ENCODE measurements at regions of chr17 and their contacts with region 1.

Region 1: DNA sequence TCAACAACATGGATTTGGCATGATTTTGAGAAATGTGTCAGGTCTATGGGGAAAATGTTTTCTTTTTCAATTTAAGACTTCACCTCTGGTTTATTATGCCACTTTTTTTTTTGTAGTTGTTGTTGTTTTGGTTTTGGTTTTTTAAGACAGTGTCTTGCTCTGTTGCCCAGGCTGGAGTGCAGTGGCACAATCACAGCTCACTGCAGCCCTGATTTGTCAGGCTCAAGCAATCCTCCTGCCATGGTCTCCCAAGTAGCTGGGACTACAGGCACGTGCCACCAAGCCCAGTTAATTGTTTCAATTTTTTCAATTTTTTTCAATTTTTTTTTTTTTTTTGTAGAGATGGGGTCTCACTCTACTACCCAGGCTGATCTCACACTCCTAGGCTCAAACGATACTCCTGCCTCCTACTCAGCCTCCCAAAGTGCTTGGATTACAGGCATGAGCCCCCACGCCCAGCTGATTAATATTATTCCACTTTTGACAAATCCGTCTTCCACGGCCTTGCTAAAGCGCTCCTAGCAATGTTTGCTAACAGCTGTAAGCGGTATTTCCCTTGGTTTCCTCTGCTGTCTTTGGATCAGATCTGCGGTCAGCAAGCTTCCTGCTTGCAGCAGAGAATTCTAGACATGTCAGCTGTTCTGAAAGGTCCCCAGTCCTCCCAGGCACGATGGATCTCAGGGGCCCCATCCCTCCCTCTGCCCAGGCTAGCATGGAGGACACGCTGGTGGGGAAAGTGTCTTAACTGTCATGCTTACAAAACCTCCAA is 7.0 kb upstream of the MILR1 start:
- DNase-seq: peak in 8 of 9 donors; percentile 25 to 53 (median 43)
- ATAC-seq: peak; percentile 87
- H3K4me3 ChIP-seq: no peak overlapping the region
- H3K4me3 Mint-ChIP-seq: peak overlapping the region; percentile 62 to 89 (median 81)
- H3K27ac ChIP-seq: peak overlapping the region; percentile 20
- H3K27ac Mint-ChIP-seq: peak overlapping the region; percentile 68 to 92 (median 84)
- H3K4me1 ChIP-seq: peaks cover 7 to 12% of the 10 kb centered on the region in 2 donors
- H3K4me1 Mint-ChIP-seq: peaks cover 17 to 40% (median 31%) of the 10 kb centered on the region in 7 donors
- H3K27me3 ChIP-seq: no peaks in the 10 kb centered on the region
- H3K27me3 Mint-ChIP-seq: no peaks in the 10 kb centered on the region

Region 2: GRCh38 chr17:64073771-64074703 is 367.9 kb before region 1 on chr17:
- CTCF ChIA-PET with region 1: no interaction called
- POLR2A ChIA-PET with region 1: no interaction called
- intact Hi-C with region 1: no loop called
- DNase-seq: no peak
- ATAC-seq: peak; percentile 72
- H3K4me3 ChIP-seq: no peak overlapping the region
- H3K4me3 Mint-ChIP-seq: no peak overlapping the region
- H3K27ac ChIP-seq: no peak overlapping the region
- H3K27ac Mint-ChIP-seq: peak overlapping the region in 4 of 9 donors; percentile 3 to 29 (median 14)
- H3K4me1 ChIP-seq: no peaks in the 10 kb centered on the region
- H3K4me1 Mint-ChIP-seq: peaks cover 0 to 30% (median 12%) of the 10 kb centered on the region in 7 donors
- H3K27me3 ChIP-seq: no peaks in the 10 kb centered on the region
- H3K27me3 Mint-ChIP-seq: no peaks in the 10 kb centered on the region

Region 3: GRCh38 chr17:64385187-64386083 is 56.5 kb before region 1 on chr17:
- CTCF ChIA-PET with region 1: no interaction called
- POLR2A ChIA-PET with region 1: no interaction called
- intact Hi-C with region 1: no loop called
- DNase-seq: peak in 1 of 9 donors; percentile 60
- ATAC-seq: peak; percentile 77
- H3K4me3 ChIP-seq: no peak overlapping the region
- H3K4me3 Mint-ChIP-seq: peak overlapping the region in 7 of 10 donors; percentile 9 to 66 (median 35)
- H3K27ac ChIP-seq: no peak overlapping the region
- H3K27ac Mint-ChIP-seq: peak overlapping the region in 8 of 9 donors; percentile 38 to 94 (median 73)
- H3K4me1 ChIP-seq: peaks cover 11 to 17% of the 10 kb centered on the region in 2 donors
- H3K4me1 Mint-ChIP-seq: peaks cover 30 to 91% (median 55%) of the 10 kb centered on the region in 7 donors
- H3K27me3 ChIP-seq: no peaks in the 10 kb centered on the region
- H3K27me3 Mint-ChIP-seq: peaks cover 0 to 10% (median 0%) of the 10 kb centered on the region in 5 donors

Region 4: DNA sequence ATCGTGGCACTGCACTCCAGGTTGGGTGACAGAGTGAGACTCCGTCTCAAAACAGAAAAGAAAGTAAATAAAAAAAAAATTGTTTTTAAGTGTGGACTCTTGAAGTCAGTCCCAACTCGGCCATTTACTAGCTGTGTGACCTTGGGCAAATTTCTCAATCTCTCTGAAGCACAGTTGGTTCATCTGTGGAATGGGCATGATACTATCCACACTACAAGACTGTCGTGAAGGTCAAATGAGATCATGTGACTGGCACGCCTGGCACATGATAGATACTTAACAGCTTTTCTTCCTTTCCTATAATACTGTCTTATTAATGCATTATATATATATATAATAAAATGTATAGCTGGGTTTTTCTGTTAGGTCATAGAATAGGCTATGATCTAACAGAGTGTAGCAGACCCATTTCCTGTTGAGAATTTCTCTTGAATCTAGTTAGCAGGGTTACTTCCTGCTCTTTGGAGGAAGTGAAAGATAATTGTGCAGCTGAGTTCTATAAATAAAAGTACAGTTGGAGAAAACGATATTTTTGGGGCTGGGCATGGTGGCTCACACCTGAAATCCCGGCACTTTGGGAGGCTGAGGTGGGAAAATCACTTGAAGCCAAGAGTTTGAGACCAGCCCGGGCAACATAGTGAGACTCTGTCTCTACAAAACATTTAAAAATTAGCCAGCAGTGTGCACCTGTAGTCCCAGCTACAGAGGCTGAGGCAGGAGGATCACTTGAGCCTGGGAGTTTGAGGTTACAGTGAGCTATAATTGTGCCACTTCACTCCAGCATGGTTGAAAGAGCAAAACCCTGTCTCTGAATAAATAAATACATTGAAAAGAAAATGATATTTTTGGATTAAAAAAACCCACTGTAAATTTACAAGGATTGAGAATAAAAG is 14.3 kb after region 1 on chr17:
- CTCF ChIA-PET with region 1: interaction called, 3 read pairs
- POLR2A ChIA-PET with region 1: interaction called, 8 read pairs
- intact Hi-C with region 1: loop called in 1 of 2 experiments (anchors 2 kb)
- DNase-seq: peak in 6 of 9 donors; percentile 7 to 47 (median 39)
- ATAC-seq: peak; percentile 72
- H3K4me3 ChIP-seq: no peak overlapping the region
- H3K4me3 Mint-ChIP-seq: peak overlapping the region in 9 of 10 donors; percentile 43 to 82 (median 64)
- H3K27ac ChIP-seq: peak overlapping the region; percentile 43
- H3K27ac Mint-ChIP-seq: peak overlapping the region; percentile 64 to 96 (median 89)
- H3K4me1 ChIP-seq: peaks cover 5 to 10% of the 10 kb centered on the region in 2 donors
- H3K4me1 Mint-ChIP-seq: peaks cover 17 to 46% (median 35%) of the 10 kb centered on the region in 7 donors
- H3K27me3 ChIP-seq: no peaks in the 10 kb centered on the region
- H3K27me3 Mint-ChIP-seq: peaks cover 0 to 2% (median 0%) of the 10 kb centered on the region in 5 donors

Region 5: GRCh38 chr17:64534175-64534574 is 92.2 kb after region 1 on chr17:
- CTCF ChIA-PET with region 1: no interaction called
- POLR2A ChIA-PET with region 1: no interaction called
- intact Hi-C with region 1: no loop called
- DNase-seq: no peak
- ATAC-seq: peak; percentile 34
- H3K4me3 ChIP-seq: no peak overlapping the region
- H3K4me3 Mint-ChIP-seq: no peak overlapping the region
- H3K27ac ChIP-seq: no peak overlapping the region
- H3K27ac Mint-ChIP-seq: peak overlapping the region in 6 of 9 donors; percentile 17 to 88 (median 50)
- H3K4me1 ChIP-seq: no peaks in the 10 kb centered on the region
- H3K4me1 Mint-ChIP-seq: peaks cover 0 to 8% (median 0%) of the 10 kb centered on the region in 7 donors
- H3K27me3 ChIP-seq: no peaks in the 10 kb centered on the region
- H3K27me3 Mint-ChIP-seq: no peaks in the 10 kb centered on the region

Region 6: GRCh38 chr17:64661976-64662773 is 220.2 kb after region 1 on chr17 and contains the start of gene SMURF2:
- CTCF ChIA-PET with region 1: no interaction called
- POLR2A ChIA-PET with region 1: no interaction called
- intact Hi-C with region 1: no loop called
- DNase-seq: peak; percentile 72 to 84 (median 80)
- ATAC-seq: peak; percentile 96
- H3K4me3 ChIP-seq: peak within 1 kb of the TSS; percentile 77
- H3K4me3 Mint-ChIP-seq: peak within 1 kb of the TSS; percentile 87 to 99 (median 98)
- H3K27ac ChIP-seq: peak within 1 kb of the TSS; percentile 72
- H3K27ac Mint-ChIP-seq: peak within 1 kb of the TSS; percentile 85 to 96 (median 95)
- H3K4me1 ChIP-seq: peaks cover 12 to 18% of the 10 kb centered on the region in 2 donors
- H3K4me1 Mint-ChIP-seq: peaks cover 28 to 42% (median 34%) of the 10 kb centered on the region in 7 donors
- H3K27me3 ChIP-seq: no peaks in the 10 kb centered on the region
- H3K27me3 Mint-ChIP-seq: no peaks in the 10 kb centered on the region
- total RNA-seq, gene SMURF2: 17.0 to 35.7 (median 32.1) TPM

Measured in naive thymus-derived CD4-positive, alpha-beta T cell (primary cell).